Astrocyte of the cerebellum (primary cell): ENCODE measurements at regions of chr14 and their contacts with region 1.

Region 1: DNA sequence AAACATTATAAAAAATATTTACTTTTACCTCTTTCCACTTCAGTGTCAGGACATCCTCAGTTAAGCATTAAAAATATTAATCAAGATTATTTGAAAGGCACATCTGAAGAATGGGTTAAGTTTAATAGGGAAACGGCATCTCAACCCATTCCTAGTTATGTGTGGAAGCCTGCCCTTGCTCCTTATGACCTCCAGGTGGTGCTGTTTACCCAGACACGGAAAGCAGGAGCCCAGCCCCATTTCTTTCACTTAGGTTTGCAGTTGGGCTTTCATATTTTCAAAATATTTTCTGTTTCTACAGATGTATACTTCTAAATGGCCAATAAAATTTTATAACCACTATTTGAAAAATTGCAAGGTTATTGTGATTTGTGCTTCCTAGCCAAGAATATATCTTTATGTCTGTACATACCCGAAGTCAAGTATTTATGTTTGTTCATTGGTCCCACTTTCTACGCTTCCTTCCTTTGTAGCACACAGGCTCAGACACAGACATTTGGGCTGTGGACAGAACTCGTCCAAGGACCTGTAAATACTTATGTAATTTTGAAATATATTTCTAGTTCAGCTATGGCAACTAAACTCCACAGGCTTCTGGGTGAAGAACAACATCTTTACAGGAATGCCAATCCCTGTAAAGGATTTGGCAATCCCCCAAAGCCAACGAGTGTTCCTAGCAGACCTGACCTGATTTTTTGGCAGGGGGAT is 247.1 kb downstream of the AKAP6 start:
- DNase-seq: peak; percentile 65
- H3K4me3 ChIP-seq: no peak overlapping the region
- CTCF ChIP-seq: peak; percentile 95

Region 2: DNA sequence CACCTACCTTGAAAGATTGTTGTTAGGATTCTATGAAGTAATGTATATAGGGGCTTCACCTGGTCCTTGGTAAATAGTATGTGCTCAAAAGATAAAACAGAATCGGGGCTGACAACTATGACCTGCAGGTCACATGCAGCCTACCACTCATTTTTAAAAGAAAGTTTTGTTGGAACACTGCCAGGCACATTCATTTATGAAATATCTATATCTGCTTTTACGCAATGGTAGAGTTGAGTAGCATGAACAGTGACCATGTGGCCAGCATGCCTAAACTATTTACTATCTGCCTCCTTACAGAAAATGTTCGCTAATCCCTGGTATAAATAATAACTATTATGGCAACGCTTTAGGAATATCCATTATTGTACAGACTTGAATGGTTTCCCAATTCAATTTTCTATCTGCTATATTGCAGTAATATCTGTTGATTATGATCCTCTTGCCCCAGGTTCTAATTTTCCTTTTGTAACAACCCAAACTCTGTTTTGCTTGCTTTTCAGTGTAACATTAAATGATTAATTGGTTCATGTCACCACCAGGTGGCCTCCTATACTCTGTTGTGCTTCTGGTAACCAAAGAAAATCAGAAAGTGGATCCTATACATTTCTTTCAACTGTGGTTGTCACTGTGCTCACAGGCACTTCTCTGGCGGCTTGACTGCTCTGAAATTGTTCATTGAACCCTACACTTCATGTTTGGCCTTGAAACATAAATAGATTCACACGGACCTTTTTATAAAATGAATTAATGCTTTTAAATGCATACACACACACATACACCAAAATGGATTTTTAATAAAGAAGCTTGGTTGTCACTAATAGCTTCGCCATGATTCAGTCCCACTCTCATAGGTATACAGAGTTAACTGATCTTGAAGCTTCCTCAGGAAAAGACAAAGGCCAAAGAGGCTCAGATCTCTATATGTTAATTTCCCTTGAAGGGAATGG is 134.8 kb after region 1 on chr14:
- in situ Hi-C with region 1: loop called (anchors 25 kb)
- DNase-seq: peak; percentile 42
- H3K4me3 ChIP-seq: no peak overlapping the region
- CTCF ChIP-seq: peak; percentile 42

Region 3: GRCh38 chr14:34322940-34323418 is 1746.7 kb after region 1 on chr14:
- in situ Hi-C with region 1: loop called (anchors 25 kb)
- DNase-seq: no peak
- H3K4me3 ChIP-seq: no peak overlapping the region
- CTCF ChIP-seq: peak; percentile 74